Mammary epithelial cell (primary cell): ENCODE measurements at regions of chr11 and their contacts with region 1.

Region 1: DNA sequence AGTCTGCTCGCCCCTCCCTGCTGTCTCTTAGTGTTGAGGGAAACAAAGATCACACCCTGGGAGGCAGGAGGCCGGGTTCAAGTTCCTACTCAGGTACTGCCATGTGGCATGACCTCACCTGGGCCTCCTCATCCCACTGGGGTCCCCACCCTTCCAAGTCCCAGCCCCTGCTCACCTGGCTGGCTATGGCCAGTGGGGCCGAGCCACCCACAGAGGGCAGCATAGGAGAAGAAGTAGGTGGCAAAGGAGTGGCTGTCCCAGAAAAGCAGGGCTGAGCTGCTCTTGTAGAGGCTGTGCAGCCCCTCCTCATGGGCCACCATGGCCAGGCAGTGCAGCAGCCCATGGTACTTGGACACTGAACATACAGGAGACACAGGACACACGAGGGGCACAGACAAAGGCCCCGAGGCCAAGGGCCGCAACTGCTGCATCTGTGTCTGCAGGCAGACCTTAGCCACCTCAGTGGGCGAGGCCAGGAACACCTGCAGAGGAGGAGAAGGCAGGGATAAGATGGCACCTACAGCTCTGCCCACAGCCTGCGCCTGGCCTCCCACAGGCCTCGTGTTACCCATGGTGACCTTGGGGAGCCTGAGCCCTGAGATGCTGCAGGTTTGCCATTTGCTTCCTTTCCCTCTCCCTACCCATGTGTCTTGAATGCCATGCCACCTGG is 50.6 kb upstream of the MPEG1 start:
- DNase-seq: peak; percentile 16
- H3K4me3 ChIP-seq: no peak overlapping the region
- H3K27ac ChIP-seq: no peak overlapping the region
- H3K4me1 ChIP-seq: peaks cover 35% of the 10 kb centered on the region
- H3K27me3 ChIP-seq: no peaks in the 10 kb centered on the region
- CTCF ChIP-seq: peak; percentile 46 to 75

Region 2: DNA sequence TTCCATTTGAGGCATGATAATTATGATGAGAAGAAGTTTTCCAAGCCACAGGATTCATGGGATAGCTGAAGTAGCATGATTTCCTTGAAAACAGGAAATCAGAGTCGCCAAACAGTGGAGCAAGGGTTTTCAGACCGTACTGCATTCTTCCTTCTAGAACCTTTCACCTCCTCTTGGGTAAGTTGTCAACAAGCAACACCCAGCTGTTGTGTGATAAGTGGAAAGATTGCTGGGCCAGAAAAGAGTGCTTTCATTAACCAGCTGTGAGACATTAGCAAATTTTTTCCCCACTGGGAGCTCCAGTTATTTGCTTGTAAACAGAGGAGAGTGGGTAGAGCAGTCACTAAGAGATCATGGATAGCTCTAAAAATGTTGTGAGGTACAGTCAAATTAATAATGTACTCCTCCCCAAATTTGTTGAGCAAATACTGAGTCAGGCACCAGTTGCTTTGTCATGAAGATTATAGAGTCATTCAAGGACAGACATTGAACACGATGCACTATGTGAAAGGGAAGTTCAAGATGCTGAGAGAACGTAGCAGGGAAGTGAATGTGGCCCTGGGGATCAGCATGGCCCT is 38.9 kb before region 1 on chr11:
- CTCF ChIA-PET with region 1: no interaction called
- dilution Hi-C with region 1: no loop called
- in situ Hi-C with region 1: no loop called
- intact Hi-C with region 1: loop called (anchors 5 kb)
- DNase-seq: no peak
- H3K4me3 ChIP-seq: no peak overlapping the region
- H3K27ac ChIP-seq: no peak overlapping the region
- H3K4me1 ChIP-seq: peaks cover 16% of the 10 kb centered on the region
- H3K27me3 ChIP-seq: no peaks in the 10 kb centered on the region
- CTCF ChIP-seq: no peak

Region 3: DNA sequence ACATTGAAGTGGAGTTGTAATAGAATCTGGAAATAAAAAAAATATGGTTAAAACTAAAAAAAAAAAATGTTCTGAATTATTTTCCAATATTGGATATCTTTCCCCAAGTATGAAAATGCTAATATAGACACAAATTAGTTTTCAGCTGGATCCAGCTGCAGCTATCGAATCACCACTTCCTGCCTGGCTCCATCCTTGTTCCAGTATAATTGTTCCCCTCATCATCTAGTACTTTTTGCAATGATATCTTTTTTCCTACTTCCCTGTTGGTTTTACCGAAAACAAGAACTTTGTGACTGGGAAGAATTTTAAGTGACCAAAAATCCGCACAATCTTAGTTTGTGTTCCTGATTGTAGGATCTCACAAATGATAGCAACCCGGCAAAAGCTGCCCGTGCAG is 257.4 kb after region 1 on chr11:
- CTCF ChIA-PET with region 1: no interaction called
- dilution Hi-C with region 1: no loop called
- in situ Hi-C with region 1: no loop called
- intact Hi-C with region 1: loop called (anchors 2 kb)
- DNase-seq: no peak
- H3K4me3 ChIP-seq: no peak overlapping the region
- H3K27ac ChIP-seq: no peak overlapping the region
- H3K4me1 ChIP-seq: no peaks in the 10 kb centered on the region
- H3K27me3 ChIP-seq: no peaks in the 10 kb centered on the region
- CTCF ChIP-seq: no peak